OCI-LY7 (cell line): ENCODE measurements at regions of chr2 and their contacts with region 1.

Region 1: GRCh38 chr2:237627441-237628246 is at the start of gene LRRFIP1:
- DNase-seq: no peak
- H3K4me3 ChIP-seq: no peak within 1 kb of the TSS
- H3K27ac ChIP-seq: no peak within 1 kb of the TSS
- H3K4me1 ChIP-seq: peaks cover 32% of the 10 kb centered on the region
- CTCF ChIP-seq: no peak
- total RNA-seq, gene LRRFIP1: 95.7 and 102 TPM in 2 replicates

Region 2: DNA sequence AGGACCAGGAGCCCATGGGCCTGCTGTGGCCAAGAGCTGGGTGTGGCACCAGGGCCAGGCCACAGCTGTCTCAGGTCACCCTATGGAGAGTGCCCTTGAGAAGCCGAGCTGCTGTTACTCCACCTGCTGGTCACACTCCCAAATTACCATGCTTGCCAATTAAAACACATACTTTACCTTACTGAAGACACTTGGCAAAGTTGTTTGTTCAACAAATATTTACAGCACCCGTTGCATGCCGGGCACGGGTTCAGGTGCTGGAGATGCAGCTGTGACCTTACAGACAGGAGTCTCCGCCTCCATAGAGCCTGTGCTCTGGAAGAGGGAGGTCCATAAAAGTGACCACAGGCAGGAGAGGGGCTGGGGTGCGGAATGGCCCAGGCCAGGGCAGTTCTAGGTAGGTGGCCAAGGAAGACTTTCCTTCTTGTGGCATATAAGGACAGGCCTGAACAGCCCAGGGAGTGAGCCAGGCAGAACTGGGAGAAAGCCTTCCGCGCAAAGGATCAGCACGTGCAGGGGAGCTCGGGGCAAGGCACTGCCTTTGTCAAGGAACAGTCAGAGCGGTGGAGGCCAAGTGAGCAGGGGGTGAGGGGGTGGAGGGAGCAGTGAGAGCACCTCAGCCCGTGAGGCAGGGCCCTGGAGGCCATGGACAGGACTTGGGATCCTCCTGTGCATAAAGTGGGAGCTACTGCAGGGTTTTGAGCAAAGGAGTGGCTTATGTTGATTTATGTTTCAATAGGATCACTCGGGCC is 147.3 kb after region 1 on chr2:
- CTCF ChIA-PET with region 1: no interaction called
- POLR2A ChIA-PET with region 1: no interaction called
- intact Hi-C with region 1: loop called (anchors 10 kb)
- DNase-seq: peak; percentile 68
- H3K4me3 ChIP-seq: no peak overlapping the region
- H3K27ac ChIP-seq: no peak overlapping the region
- H3K4me1 ChIP-seq: no peaks in the 10 kb centered on the region
- CTCF ChIP-seq: peak; percentile 84

Region 3: DNA sequence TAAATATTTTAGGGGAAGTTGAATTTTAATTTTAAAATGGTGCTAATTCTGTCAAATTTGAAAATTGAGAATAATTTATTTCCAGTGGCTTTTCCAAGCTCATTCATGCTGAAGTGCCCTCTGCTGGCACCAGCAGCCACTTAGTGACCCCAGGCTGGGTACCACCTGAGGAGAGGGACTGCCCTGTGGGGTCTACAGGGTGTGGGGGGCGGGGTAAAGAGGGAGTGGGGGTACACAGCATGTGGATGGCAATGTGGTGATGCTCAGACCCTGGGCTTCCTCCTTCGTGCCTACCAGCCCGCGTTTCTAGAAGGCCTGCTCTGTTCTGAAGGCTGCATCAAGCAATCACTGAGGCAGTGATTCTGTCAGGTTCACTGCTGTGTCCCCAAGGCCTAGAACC is 388.1 kb after region 1 on chr2:
- CTCF ChIA-PET with region 1: interaction called, 10 read pairs
- POLR2A ChIA-PET with region 1: no interaction called
- intact Hi-C with region 1: no loop called
- DNase-seq: peak; percentile 13
- H3K4me3 ChIP-seq: no peak overlapping the region
- H3K27ac ChIP-seq: no peak overlapping the region
- H3K4me1 ChIP-seq: no peaks in the 10 kb centered on the region
- CTCF ChIP-seq: peak; percentile 65

Region 4: GRCh38 chr2:238247002-238247822 is 619.6 kb after region 1 on chr2:
- CTCF ChIA-PET with region 1: no interaction called
- POLR2A ChIA-PET with region 1: no interaction called
- intact Hi-C with region 1: no loop called
- DNase-seq: no peak
- H3K4me3 ChIP-seq: no peak overlapping the region
- H3K27ac ChIP-seq: no peak overlapping the region
- H3K4me1 ChIP-seq: no peaks in the 10 kb centered on the region
- CTCF ChIP-seq: no peak